ENCODE measurements at regions of chr5 and their contacts with region 1.

Region 1: DNA sequence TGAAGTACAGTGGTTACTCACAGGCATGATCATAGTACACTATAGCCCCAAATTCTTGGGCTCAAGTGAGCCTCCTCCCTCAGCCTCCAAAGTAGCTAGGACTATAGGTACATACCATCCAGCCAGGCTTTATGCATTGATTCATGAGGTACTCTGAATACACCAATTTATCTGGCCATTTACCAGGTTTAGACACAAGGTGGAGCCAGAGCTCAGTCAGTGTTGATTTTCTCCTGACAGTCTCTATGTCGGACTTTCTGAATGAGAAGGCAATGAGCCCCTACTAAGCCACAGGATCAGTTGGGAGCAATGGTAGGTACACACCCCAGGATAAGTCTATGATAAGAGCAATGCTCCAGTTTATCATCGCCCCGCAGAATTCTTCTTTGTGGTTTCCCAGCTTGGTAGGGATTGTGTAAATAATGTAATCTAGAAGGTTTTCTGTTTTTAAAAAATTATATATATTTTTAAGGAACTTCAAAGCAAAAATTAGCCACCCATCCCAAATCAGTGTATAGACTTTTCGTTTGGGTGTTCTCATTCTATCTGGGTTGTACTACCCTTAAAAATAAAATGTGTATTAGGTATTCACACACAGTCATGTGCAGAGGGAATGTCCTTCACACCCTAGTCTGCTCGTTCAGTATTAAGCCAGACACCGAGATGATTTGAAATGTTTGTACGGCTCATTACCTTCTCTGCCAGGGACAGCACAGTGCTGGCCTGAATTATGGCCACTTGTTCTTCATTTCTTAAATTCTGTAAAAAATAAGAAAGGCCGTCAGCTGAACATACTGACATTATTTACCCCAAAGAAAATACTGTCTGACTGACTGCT is 118.4 kb upstream of the DPYSL3 start:
- DNase-seq: peak; percentile 39
- CTCF ChIP-seq: peak; percentile 68

Region 2: DNA sequence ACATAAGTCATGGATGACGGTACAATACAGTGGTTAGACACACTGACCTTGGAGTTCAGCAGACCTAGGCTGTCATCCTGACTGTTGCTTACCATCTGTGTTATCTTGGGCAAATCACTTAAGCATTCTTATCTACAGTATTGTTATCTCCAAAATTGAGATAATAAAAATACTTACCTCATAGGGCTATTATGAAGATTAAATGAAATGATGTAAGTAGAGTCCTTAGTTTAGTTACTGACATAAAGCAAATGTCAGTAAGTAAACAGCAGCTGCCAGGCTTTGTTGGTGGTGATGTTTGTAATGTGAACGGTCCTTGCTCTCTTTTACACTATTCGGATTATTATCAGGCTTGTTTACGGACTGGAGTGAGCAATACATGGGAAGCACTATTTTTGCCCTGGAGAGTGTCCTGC is 11.1 kb before region 1 on chr5:
- CTCF ChIA-PET with region 1: interaction called, 24 read pairs
- POLR2A ChIA-PET with region 1: no interaction called
- DNase-seq: no peak
- CTCF ChIP-seq: no peak

Region 3: GRCh38 chr5:147734894-147735293 is 106.6 kb after region 1 on chr5:
- CTCF ChIA-PET with region 1: no interaction called
- POLR2A ChIA-PET with region 1: no interaction called
- DNase-seq: no peak
- CTCF ChIP-seq: no peak

Region 4: GRCh38 chr5:147822686-147823491 is 194.6 kb after region 1 on chr5:
- CTCF ChIA-PET with region 1: interaction called, 50 read pairs
- POLR2A ChIA-PET with region 1: no interaction called
- DNase-seq: peak; percentile 33
- CTCF ChIP-seq: peak; percentile 67

Measured in GM10248 (cell line).